Colonic mucosa (tissue), 4 donors: ENCODE measurements at regions of chrX and their contacts with region 1.

Region 1: GRCh38 chrX:14039344-14039743 is 9.7 kb upstream of the GEMIN8 start:
- DNase-seq: peak; percentile 69
- H3K4me3 ChIP-seq: no peak overlapping the region
- H3K27ac ChIP-seq: no peak overlapping the region
- H3K4me1 ChIP-seq: no peaks in the 10 kb centered on the region
- H3K27me3 ChIP-seq: no peaks in the 10 kb centered on the region
- CTCF ChIP-seq: peak; percentile 85

Region 2: DNA sequence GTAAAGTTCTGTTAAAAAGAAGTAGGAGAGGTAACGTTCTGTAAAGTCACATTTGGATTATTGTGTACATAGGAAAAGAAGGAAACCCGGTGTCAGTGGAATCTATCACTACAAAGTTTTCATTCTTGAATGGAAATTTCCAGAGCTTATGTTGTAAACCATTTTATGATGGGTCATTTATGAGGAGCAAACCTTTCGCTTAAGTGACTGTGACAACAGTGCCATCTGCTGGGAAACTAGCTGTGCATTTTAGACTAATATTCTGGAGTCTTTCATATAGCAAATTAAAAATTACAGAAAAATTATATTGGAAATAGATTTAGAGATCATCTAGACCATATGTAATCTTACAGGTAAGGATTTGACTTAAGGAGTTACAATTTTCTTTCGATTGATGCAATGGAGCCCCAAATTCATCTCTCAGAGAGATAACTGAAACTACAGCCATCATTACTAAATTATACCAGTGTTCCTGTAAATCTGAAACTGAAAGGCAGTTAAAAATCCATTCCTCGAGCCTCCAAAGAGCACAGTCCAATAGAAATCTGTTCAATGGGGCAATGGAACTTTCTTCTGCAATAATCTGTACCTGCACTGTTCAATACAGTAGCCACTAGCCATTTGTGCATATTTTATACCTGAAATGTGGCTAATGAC is 1203.7 kb after region 1 on chrX:
- intact Hi-C with region 1: loop called (anchors 10 kb)
- DNase-seq: peak; percentile 56
- H3K4me3 ChIP-seq: no peak overlapping the region
- H3K27ac ChIP-seq: no peak overlapping the region
- H3K4me1 ChIP-seq: no peaks in the 10 kb centered on the region
- H3K27me3 ChIP-seq: no peaks in the 10 kb centered on the region
- CTCF ChIP-seq: peak; percentile 51